Panc1 (cell line): ENCODE measurements at regions of chr17 and their contacts with region 1.

Region 1: DNA sequence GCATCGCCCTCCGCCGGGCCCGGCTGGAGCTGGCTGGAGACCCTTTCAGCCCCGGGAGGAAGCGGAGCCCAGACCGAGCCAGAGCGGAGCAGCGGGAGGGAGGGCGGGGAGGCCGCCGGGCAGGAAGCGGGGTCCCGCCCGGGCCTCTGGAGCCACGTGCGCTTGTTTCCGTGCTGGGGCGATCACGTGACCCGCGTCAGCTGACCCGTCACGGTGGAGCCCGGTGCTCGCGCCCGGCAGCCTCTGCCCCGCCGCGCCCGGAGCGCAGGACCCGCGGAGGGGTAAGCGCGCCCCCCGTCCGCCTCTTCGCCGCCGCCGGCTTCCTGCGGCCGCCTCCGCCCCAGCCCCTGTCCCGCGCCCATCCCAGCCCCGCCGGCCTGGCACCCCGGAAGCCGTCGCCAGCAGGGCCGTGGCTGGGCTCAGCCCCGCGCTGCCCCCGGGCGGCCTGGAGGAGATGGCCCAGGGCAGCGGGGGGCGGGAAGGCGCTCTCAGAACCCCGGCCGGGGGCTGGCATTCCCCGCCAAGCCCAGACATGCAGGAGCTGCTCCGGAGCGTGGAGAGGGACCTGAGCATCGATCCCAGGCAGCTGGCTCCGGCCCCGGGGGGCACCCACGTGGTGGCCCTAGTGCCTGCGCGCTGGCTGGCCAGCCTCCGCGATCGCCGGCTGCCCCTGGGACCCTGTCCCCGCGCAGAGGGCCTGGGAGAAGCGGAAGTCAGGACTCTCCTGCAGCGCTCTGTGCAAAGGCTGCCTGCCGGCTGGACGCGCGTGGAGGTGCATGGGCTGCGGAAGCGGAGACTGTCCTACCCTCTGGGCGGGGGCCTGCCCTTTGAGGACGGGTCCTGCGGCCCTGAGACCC is at the start of gene WDR81:
- DNase-seq: no peak
- ATAC-seq: peak; percentile 87
- H3K4me3 ChIP-seq: peak within 1 kb of the TSS; percentile 53 to 61
- H3K27ac ChIP-seq: peak within 1 kb of the TSS; percentile 74
- H3K4me1 ChIP-seq: peaks cover 3% of the 10 kb centered on the region
- H3K27me3 ChIP-seq: no peaks in the 10 kb centered on the region
- CTCF ChIP-seq: no peak
- total RNA-seq, gene WDR81: 29.5 TPM

Region 2: GRCh38 chr17:1563786-1564613 is 160.7 kb before region 1 on chr17:
- CTCF ChIA-PET with region 1: no interaction called
- POLR2A ChIA-PET with region 1: no interaction called
- in situ Hi-C with region 1: no loop called
- intact Hi-C with region 1: no loop called
- DNase-seq: no peak
- ATAC-seq: no peak
- H3K4me3 ChIP-seq: no peak overlapping the region
- H3K27ac ChIP-seq: no peak overlapping the region
- H3K4me1 ChIP-seq: peaks cover 4% of the 10 kb centered on the region; the same call in 1 of the 2 replicates
- H3K27me3 ChIP-seq: no peaks in the 10 kb centered on the region
- CTCF ChIP-seq: no peak

Region 3: GRCh38 chr17:1783834-1784611 is 59.3 kb after region 1 on chr17:
- CTCF ChIA-PET with region 1: interaction called, 16 read pairs
- POLR2A ChIA-PET with region 1: interaction called, 8 read pairs
- in situ Hi-C with region 1: no loop called
- intact Hi-C with region 1: loop called (anchors 5 kb)
- DNase-seq: peak; percentile 8
- ATAC-seq: peak; percentile 68
- H3K4me3 ChIP-seq: no peak overlapping the region
- H3K27ac ChIP-seq: no peak overlapping the region; the same call in 1 of the 2 replicates
- H3K4me1 ChIP-seq: peaks cover 15% of the 10 kb centered on the region
- H3K27me3 ChIP-seq: no peaks in the 10 kb centered on the region
- CTCF ChIP-seq: no peak; the same call in 1 of the 2 replicates